Ovary (tissue), 10 donors: ENCODE measurements at regions of chr1 and their contacts with region 1.

Region 1: DNA sequence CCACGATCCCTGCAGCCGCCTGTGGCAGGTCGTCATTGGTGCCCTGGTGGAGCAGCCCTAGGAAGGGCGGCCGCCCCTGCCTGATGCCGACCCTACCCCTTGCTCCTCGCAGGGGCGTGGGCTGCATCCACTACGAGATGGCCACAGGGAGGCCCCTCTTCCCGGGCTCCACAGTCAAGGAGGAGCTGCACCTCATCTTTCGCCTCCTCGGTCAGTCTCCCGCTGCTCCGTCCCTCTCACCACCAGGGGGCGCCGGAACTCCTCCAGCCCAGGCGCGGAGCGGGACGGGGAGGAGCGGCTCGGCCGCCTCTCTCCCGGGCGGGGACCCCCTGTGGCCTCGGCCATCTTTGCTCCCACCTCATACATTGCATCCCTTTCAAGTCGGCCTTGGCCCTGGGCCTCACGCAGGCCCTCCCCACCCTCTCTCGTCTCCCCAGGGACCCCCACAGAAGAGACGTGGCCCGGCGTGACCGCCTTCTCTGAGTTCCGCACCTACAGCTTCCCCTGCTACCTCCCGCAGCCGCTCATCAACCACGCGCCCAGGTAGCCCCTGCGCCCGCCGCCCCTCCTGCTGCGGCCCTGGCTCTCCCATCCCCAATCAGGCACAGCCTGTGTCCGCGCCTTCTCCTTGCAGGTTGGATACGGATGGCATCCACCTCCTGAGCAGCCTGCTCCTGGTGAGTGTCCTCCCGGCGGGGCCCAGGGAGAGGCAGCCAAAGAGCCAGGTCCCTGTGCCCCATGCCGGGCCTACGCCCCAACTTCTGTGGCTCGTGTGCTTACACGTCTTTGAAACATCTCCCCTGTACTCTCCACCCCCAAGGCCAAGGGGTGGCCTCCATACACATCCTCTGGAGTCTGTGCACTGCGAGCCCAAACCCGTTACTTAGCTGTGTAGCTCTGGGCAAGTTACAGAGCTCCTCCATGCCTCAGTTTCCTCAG is 24.7 kb downstream of the CDK18 start:
- DNase-seq: peak; percentile 80 to 93 (median 89)
- H3K4me3 ChIP-seq: no peak overlapping the region
- H3K27ac ChIP-seq: no peak overlapping the region
- H3K4me1 ChIP-seq: peaks cover 3% of the 10 kb centered on the region
- H3K27me3 ChIP-seq: no peaks in the 10 kb centered on the region
- CTCF ChIP-seq: peak; percentile 89 to 96 (median 91)
- EP300 ChIP-seq: no peak
- POLR2A ChIP-seq: no peak

Region 2: DNA sequence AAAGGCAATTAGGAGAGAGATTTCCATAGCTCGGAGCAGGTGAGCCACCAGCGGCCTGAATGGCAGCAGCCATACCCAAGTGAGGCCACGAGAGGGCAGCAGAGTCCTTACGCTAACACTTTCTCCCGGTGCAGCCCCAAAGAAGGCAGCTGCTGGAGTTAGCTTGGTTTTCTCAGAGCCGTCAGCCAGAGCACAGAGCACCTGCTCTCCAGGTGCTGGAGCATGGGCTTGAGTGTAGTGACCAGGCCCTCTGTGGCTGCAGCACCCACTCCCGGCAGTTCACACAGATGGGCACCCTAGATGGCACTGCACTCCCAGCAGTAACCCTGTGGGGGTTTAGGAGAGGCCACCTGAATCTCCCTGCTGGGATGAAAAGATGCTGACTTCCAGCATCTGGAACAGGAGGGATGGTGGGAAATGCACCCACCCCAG is 255.6 kb before region 1 on chr1:
- intact Hi-C with region 1: loop called in 3 of 4 experiments (anchors 5 to 10 kb)
- DNase-seq: peak; percentile 76 to 90 (median 87)
- H3K4me3 ChIP-seq: no peak overlapping the region
- H3K27ac ChIP-seq: no peak overlapping the region
- H3K4me1 ChIP-seq: peaks cover 6% of the 10 kb centered on the region
- H3K27me3 ChIP-seq: no peaks in the 10 kb centered on the region
- CTCF ChIP-seq: peak; percentile 88 to 96 (median 96)
- EP300 ChIP-seq: no peak
- POLR2A ChIP-seq: no peak

Region 3: DNA sequence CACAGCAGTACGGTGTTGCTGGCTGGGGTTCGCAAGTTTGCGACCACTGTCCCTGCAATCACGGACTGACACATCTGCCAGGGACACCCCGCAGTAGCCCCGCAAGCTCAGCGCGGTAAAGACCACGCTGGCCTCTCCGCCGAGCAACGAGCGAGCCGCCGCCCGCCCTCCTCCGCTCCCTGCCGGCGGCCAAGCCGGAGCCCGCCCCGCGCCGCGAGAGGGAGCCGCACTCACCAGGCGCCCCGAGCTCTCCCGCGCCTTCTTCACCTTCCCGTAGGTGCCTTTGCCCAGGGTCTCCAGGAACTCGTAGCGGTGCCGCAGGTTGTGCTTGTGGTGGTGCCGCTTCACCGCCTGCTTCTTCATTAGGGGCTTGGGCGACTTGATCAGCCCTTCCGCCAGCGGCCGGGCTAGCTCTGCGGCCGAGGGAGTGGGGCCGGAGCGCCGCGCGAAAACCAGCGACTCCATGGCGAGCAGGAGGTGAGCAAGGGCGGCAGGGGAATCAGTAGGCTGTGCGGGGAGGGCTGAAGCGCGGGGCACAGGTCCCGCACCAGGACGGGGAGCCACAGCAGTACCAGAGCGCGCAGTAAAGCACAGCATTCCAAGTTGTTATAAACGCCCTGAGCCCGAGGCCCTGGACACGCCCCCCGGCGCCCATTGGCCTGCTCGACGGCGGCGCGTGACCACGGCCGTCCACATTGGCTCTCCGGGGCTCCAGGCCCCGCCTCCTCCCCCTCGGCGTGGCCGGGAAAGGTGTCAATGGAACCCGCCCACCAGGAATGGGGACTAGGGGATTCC is 207.8 kb before region 1 on chr1 and contains the start of gene NUAK2:
- intact Hi-C with region 1: no loop called
- DNase-seq: peak; percentile 86 to 92 (median 88)
- H3K4me3 ChIP-seq: peak within 1 kb of the TSS; percentile 52
- H3K27ac ChIP-seq: peak within 1 kb of the TSS in 1 of 2 donors; percentile 47
- H3K4me1 ChIP-seq: peaks cover 15% of the 10 kb centered on the region
- H3K27me3 ChIP-seq: no peaks in the 10 kb centered on the region
- CTCF ChIP-seq: peak in 1 of 3 donors; percentile 33
- EP300 ChIP-seq: no peak
- POLR2A ChIP-seq: peak; percentile 20
- total RNA-seq, gene NUAK2: 2.7 to 53.2 (median 3.7) TPM

Region 4: GRCh38 chr1:205335643-205336091 is 193.5 kb before region 1 on chr1:
- intact Hi-C with region 1: loop called in 2 of 4 experiments (anchors 5 to 10 kb)
- DNase-seq: peak; percentile 85 to 91 (median 86)
- H3K4me3 ChIP-seq: no peak overlapping the region
- H3K27ac ChIP-seq: no peak overlapping the region
- H3K4me1 ChIP-seq: peaks cover 5% of the 10 kb centered on the region
- H3K27me3 ChIP-seq: no peaks in the 10 kb centered on the region
- CTCF ChIP-seq: peak; percentile 91 to 95 (median 92)
- EP300 ChIP-seq: no peak
- POLR2A ChIP-seq: no peak

Region 5: DNA sequence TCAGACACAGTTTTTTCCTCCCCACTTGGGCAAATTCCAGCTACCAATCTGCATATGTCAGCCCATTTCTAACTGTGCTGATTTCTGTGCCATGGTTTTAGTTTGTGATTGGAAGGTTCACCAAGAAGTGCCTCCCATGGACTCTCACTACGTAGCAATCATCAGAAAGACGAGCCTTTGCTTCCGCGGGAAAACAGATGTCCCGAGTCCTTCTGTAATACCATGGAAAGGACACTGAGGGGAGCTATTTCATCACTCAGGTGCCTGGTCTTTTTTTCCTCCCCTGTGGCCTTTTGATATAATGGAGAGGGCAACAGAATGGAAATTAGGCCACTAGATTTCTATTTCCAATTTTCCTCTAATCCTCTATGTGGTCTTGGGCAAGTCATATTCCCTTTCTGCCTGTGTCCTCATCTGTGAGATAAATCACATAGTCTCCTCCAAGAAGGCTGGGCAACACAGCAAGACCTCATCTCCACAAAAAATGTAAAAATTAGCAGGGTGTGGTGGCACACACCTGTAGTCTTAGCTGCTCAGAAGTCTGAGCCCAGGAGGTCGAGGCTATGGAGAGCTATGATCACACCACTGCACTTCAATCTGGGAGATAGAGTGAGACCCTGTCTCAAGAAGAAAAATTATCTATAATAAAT is 132.1 kb before region 1 on chr1:
- intact Hi-C with region 1: loop called in 1 of 4 experiments (anchors 10 kb)
- DNase-seq: peak in 1 of 5 donors; percentile 44
- H3K4me3 ChIP-seq: no peak overlapping the region
- H3K27ac ChIP-seq: no peak overlapping the region
- H3K4me1 ChIP-seq: no peaks in the 10 kb centered on the region
- H3K27me3 ChIP-seq: no peaks in the 10 kb centered on the region
- CTCF ChIP-seq: peak; percentile 28 to 79 (median 78)
- EP300 ChIP-seq: no peak
- POLR2A ChIP-seq: no peak

Region 6: DNA sequence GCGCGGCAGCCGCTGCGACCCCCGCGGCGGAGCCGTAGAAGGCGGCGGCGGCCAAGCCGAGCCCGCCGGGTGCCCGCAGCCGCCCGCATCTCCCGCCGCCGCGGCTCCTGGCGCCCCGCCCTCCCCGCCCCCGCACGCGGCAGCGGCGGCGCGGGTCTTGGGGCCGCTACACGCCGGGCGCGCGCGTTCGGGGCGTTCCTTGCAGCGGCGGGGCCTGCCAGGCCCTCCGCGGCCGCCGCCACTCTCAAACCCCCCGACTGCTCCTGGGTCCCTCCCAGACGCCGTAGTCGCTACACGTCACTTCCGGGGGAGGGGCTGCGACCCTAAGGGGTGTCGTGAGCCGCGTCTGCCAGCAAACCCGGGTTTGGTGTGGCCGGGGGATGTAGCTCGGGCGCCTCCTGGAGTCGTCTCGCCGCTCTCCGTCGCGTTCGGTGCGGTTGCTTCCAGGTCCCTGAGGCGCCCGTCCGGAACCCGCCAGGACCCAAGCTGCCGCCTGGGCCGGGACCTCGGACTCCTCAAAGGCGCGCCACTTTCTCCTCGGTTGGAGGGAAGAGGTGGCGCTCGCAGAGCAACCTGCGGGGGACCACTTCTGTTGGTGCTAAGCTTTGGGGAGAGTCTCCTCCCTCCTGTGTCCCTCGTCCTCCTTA is 102.7 kb after region 1 on chr1 and contains the start of gene ELK4:
- intact Hi-C with region 1: loop called in 3 of 4 experiments (anchors 2 to 10 kb)
- DNase-seq: peak; percentile 99
- H3K4me3 ChIP-seq: peak within 1 kb of the TSS; percentile 72
- H3K27ac ChIP-seq: peak within 1 kb of the TSS; percentile 92 to 97
- H3K4me1 ChIP-seq: peaks cover 2% of the 10 kb centered on the region
- H3K27me3 ChIP-seq: no peaks in the 10 kb centered on the region
- CTCF ChIP-seq: peak in 2 of 3 donors; percentile 75 to 91
- EP300 ChIP-seq: no peak
- POLR2A ChIP-seq: peak; percentile 95
- total RNA-seq, gene ELK4: 16.3 to 69.5 (median 55.1) TPM

Region 7: GRCh38 chr1:205658943-205659581 is 129.9 kb after region 1 on chr1:
- intact Hi-C with region 1: loop called (anchors 2 to 5 kb)
- DNase-seq: peak; percentile 80 to 91 (median 86)
- H3K4me3 ChIP-seq: no peak overlapping the region
- H3K27ac ChIP-seq: no peak overlapping the region
- H3K4me1 ChIP-seq: peaks cover 3% of the 10 kb centered on the region
- H3K27me3 ChIP-seq: no peaks in the 10 kb centered on the region
- CTCF ChIP-seq: peak; percentile 68 to 91 (median 84)
- EP300 ChIP-seq: no peak
- POLR2A ChIP-seq: no peak